OCI-LY7 (cell line): ENCODE measurements at regions of chr10 and their contacts with region 1.

Region 1: GRCh38 chr10:68526626-68527307 is 556 bp downstream of the SLC25A16 start:
- DNase-seq: no peak
- H3K4me3 ChIP-seq: peak overlapping the region; percentile 93
- H3K27ac ChIP-seq: no peak overlapping the region
- H3K4me1 ChIP-seq: peaks cover 4% of the 10 kb centered on the region
- CTCF ChIP-seq: no peak

Region 2: DNA sequence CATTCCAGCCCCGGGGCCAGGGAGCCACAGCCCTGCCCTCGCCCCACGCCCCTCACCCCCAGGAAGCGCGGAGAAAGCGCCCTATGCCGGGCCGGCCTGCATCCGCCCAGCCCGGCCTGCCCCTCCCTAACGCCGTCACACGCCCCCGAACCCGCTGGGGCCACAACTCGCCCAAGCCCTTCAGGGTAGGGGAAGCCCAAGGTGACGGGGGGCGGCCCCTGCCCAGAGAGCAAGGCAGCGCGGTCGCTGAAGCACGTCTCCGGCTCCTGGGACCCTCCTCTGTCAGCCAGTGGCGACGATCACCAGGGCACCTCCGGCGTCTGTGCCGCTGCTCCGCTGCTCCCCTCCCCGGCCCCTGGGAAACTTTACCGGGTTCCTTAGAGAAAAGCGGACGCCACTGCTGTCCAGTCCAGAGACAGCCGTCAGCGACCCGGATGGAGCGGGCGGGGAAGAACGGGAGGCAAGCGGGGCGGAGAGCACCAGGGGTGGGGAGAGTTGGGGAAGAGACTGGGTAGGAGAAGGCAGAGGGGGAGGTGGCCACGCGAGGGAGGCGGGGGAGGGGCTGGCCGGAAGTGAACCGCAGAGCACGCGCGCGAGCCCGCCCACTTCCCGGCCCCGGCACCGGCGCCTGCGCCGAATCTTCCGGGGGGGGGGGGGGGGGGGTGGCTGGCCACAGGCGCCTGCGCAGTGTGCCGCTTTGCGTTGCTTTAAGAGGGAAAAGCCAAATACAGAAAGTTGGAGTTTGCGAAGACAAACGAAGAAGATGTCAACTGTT is 451.8 kb before region 1 on chr10 and contains the start of gene HERC4:
- CTCF ChIA-PET with region 1: no interaction called
- POLR2A ChIA-PET with region 1: no interaction called
- intact Hi-C with region 1: loop called (anchors 2 kb)
- DNase-seq: peak; percentile 91
- H3K4me3 ChIP-seq: peak within 1 kb of the TSS; percentile 85
- H3K27ac ChIP-seq: peak within 1 kb of the TSS; percentile 83
- H3K4me1 ChIP-seq: peaks cover 15% of the 10 kb centered on the region
- CTCF ChIP-seq: no peak
- total RNA-seq, gene HERC4: 34.2 and 36.1 TPM in 2 replicates

Region 3: GRCh38 chr10:68301790-68302502 is 224.8 kb before region 1 on chr10:
- CTCF ChIA-PET with region 1: no interaction called
- POLR2A ChIA-PET with region 1: no interaction called
- intact Hi-C with region 1: no loop called
- DNase-seq: peak; percentile 87
- H3K4me3 ChIP-seq: peak overlapping the region; percentile 50
- H3K27ac ChIP-seq: peak overlapping the region; percentile 99
- H3K4me1 ChIP-seq: peaks cover 49% of the 10 kb centered on the region
- CTCF ChIP-seq: peak; percentile 93

Region 4: DNA sequence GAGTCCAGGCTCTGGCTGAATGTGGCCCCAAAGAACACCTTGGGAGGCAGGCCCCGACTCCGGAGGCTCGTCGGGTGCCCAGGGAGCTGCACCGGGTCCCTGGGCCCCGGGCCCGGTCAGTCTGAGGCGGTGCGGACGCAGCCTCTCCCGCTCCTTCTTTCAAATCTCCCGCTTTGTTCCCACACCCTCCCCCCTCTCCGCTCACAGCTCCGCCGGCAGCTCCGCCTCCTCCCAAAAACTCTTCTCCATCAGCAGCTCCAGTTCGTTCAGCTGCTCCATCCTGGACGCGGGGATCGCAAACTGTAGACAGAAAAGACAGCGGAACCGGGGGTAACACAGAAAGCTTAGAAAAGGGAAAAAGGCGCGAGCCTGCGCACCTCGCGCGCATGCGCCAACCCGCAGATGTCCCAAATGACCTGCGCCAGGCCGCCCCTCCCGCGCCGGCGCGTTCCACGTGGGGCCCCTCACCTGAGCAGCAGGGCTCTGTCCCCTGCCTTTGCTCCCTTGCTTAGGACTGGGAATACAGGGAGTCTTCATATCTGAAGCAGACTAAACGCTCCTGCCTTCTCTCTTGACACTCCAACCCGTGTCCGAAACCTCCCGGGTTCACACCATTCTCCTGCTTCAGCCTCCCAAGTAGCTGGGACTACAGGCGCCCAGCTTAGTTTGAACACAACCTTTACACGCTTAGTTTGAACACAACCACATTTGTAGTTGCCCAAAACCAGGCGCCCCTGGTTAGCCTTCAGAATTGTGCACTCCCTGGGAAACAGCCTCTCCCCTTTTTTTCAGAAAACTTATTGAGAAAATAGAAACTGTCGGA is 55.0 kb before region 1 on chr10 and contains the start of gene DNA2:
- CTCF ChIA-PET with region 1: no interaction called
- POLR2A ChIA-PET with region 1: interaction called, 3 read pairs
- intact Hi-C with region 1: loop called (anchors 2 kb)
- DNase-seq: peak; percentile 92
- H3K4me3 ChIP-seq: peak within 1 kb of the TSS; percentile 84
- H3K27ac ChIP-seq: peak within 1 kb of the TSS; percentile 51
- H3K4me1 ChIP-seq: peaks cover 17% of the 10 kb centered on the region
- CTCF ChIP-seq: no peak
- total RNA-seq, gene DNA2: 35.9 and 42.1 TPM in 2 replicates

Region 5: GRCh38 chr10:68720793-68721672 is 194.3 kb after region 1 on chr10 and contains the start of gene CCAR1:
- CTCF ChIA-PET with region 1: no interaction called
- POLR2A ChIA-PET with region 1: interaction called, 4 read pairs
- intact Hi-C with region 1: loop called (anchors 1 kb)
- DNase-seq: peak; percentile 99
- H3K4me3 ChIP-seq: peak within 1 kb of the TSS; percentile 94
- H3K27ac ChIP-seq: peak within 1 kb of the TSS; percentile 71
- H3K4me1 ChIP-seq: peaks cover 12% of the 10 kb centered on the region
- CTCF ChIP-seq: no peak
- total RNA-seq, gene CCAR1: 66.3 and 66.4 TPM in 2 replicates

Region 6: DNA sequence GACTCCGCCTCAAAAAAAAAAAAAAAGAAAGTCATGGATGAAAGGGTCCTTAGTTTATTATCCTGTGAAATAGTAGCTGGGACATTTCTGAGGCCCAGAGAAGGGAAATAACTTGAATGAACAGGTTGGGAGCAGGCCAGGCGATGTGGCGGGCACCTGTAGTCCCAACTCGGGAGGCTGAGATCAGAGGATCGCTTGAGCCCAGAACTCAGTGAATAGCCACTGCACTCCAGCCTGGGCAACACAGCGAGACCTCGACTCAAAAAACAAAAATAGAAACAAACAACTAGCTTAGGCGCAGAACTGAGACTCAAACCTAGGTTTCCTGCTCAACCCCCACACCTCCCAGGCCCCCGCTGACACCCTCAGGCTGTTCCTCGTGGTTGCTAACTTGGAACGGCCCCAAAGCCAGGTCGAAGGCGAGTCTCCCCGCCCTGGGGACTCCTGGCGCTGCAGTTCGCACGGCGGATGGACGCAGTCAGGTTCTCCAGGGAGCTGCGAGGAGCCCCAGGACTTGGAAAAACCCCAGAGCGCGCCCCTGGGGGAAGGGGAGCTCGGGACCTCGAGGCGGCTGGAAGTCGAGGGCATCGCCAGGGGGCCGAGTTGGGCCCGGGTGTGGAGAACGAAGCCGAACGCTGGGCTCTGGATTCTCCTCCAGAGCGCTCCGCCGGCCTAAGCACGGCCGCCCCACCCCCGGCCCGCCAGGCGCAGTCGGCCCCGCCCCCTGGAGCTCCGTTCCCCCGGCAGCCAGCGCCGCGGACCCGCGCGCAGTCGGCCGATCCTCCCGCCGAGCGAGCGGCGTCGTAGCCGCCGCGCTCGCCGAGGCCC is 300.2 kb after region 1 on chr10 and contains the start of gene STOX1:
- CTCF ChIA-PET with region 1: interaction called, 3 read pairs
- POLR2A ChIA-PET with region 1: no interaction called
- intact Hi-C with region 1: loop called (anchors 5 kb)
- DNase-seq: peak; percentile 78
- H3K4me3 ChIP-seq: peak within 1 kb of the TSS; percentile 69
- H3K27ac ChIP-seq: peak within 1 kb of the TSS; percentile 34
- H3K4me1 ChIP-seq: peaks cover 9% of the 10 kb centered on the region
- CTCF ChIP-seq: 0 out of 2 replicates have a peak, but pooled peaks have one; percentile 19
- total RNA-seq, gene STOX1: 2.8 and 3.6 TPM in 2 replicates

Region 7: DNA sequence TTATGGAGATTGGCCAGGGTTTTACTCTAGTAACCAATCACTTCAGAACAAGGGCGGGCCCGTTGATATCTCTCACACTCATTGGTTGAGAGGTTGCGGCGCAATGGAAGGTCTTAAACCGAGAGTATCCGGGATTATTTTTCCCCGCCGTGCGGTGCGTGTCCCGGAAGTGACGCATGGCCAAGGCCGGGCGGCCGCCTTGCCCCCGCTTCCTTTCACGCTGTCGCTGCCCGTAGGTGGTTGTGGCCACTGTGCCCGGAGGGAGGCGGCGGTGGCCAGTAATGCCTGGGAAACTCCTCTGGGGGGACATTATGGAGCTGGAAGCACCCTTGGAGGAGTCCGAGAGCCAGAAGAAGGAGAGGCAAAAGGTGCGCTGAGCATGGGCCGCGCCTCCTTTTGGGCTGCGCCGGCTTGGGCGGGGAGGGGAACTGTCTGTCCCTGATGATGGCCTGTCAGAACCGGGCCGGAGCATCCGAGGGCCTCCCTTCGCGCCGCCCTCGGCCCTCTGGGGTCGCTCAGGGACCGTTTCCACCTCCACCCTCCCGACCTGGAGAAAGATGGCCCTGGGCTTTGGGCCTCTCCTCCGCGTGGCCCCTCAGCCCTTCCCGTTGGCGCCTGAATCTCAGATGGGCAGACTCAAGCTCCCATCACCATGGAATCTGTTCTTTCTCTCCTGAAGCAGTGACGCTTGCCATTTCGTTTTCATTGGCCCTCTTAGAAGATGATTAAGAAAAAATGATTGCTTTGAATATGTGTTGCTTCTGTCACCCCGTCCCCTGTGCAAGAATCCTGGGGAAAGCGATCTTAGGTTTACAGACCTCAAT is 374.5 kb after region 1 on chr10 and contains the start of gene DDX50:
- CTCF ChIA-PET with region 1: no interaction called
- POLR2A ChIA-PET with region 1: no interaction called
- intact Hi-C with region 1: loop called (anchors 5 kb)
- DNase-seq: peak; percentile 99
- H3K4me3 ChIP-seq: peak within 1 kb of the TSS; percentile 88
- H3K27ac ChIP-seq: peak within 1 kb of the TSS; percentile 58
- H3K4me1 ChIP-seq: peaks cover 21% of the 10 kb centered on the region
- CTCF ChIP-seq: no peak
- total RNA-seq, gene DDX50: 29.0 and 31.1 TPM in 2 replicates